Common myeloid progenitor, CD34-positive (primary cell): ENCODE measurements at regions of chr2 and their contacts with region 1.

Region 1: DNA sequence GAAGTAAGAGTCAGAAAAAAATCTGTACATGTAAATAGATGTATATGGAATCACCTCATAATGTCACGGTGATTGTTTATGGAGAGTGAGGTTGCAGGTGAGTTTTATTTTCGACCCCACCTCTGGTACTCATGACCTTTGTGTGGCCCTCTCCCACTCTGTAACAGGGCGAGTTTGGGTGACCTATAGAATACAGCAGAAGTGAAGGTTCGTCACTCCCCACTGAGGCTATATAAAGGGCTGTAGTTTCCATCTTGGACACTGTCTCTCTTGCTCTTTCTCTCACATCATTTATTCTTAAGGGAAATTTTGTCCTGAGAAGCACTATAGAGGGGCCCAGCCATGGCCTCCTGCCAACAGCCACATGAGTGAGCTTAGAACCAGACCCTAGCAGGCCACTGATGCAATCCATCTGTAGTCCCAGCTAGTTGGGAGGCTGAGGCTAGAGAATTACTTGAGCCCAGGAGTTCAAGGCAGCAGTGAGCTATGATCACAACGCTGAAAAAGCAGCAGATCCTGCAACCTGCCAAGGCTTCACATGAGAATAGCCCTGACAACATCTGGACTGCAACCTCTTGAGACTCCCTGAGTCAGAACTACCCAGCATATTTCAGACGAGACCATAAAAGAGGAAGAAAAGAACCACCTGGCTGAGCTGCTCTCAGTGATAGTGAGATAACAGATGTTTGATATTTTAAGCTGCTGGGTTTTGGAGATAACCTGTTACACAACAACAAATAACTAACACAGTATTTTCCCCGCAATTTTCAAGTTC is 74.3 kb upstream of the SLC1A4 start:
- DNase-seq: peak; percentile 78 to 98 (median 97)
- H3K4me3 ChIP-seq: no peak overlapping the region
- H3K27ac ChIP-seq: no peak overlapping the region
- H3K4me1 ChIP-seq: peaks cover 13 to 39% (median 31%) of the 10 kb centered on the region in 4 experiments
- H3K27me3 ChIP-seq: no peaks in the 10 kb centered on the region

Region 2: DNA sequence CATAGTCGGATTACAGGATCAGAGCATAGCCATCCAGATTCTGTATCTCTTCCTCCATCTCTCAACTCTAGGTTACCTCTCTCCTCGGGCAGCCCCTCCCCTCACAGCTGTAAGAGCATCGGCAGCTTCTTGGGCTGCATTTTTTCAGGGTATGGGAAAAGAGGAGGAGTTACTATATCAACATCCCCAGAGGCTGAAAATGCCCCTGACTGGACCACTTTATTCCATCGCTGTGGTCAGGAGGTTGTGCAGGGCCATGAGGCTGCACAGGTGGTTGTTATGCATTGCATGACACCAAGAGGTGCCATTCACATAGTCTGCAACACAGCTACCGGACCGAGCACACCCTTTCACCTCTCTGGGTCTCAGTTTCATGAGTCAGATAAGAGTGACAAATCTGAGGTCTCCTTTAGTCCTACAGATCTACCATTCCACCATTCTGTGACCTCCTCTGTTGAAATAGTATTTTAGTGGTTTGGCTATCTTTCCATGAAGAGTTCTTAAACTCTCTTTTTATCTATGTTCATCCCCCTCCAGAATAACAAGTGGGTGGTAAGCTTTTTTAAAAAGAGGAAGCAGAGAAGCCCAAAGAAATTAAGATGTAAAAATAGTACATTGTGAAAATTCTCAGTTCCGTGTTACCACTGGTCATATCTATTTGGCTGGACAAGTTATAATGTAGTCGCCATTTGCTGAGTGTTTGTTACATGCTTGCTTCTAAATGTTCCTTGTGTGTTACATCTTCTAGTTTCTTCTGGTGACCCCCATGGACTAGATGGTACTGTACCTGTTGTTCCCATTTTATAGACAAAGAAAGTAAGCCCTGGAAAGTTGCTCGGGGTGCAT is 17.7 kb after region 1 on chr2:
- CTCF ChIA-PET with region 1: interaction called, 18 read pairs
- POLR2A ChIA-PET with region 1: no interaction called
- DNase-seq: peak in 2 of 3 donors; percentile 69 to 76
- H3K4me3 ChIP-seq: peak overlapping the region in 1 of 7 experiments; percentile 3
- H3K27ac ChIP-seq: no peak overlapping the region
- H3K4me1 ChIP-seq: peaks cover 6 to 34% (median 22%) of the 10 kb centered on the region in 4 experiments
- H3K27me3 ChIP-seq: no peaks in the 10 kb centered on the region

Region 3: GRCh38 chr2:64945973-64946768 is 31.2 kb after region 1 on chr2:
- CTCF ChIA-PET with region 1: interaction called, 36 read pairs
- POLR2A ChIA-PET with region 1: interaction called, 4 read pairs
- DNase-seq: peak; percentile 52 to 82 (median 78)
- H3K4me3 ChIP-seq: peak overlapping the region in 5 of 7 experiments; percentile 0 to 55 (median 50)
- H3K27ac ChIP-seq: peak overlapping the region; percentile 89 to 91
- H3K4me1 ChIP-seq: peaks cover 15 to 82% (median 76%) of the 10 kb centered on the region in 4 experiments
- H3K27me3 ChIP-seq: no peaks in the 10 kb centered on the region

Region 4: DNA sequence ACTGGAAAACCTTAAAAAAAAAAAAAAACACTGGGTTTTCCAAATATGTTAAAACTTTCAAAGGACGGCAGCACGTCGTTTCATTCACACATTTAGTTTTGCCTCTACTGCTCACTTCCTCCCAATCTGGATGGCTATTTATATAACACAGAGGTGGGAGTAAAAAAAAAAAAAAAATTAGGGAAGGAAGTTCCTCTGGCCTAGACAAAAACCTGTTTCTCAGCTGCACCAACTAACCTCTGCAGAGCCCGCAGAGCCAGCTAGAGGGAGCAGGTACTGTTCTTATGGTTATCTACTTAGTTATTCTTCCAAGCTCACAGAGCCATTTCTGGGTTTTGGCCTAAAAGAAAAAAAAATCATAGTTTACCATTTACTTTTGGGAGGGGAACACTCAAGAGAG is 102.4 kb after region 1 on chr2:
- CTCF ChIA-PET with region 1: interaction called, 17 read pairs
- POLR2A ChIA-PET with region 1: no interaction called
- DNase-seq: peak; percentile 90 to 92 (median 91)
- H3K4me3 ChIP-seq: peak overlapping the region in 3 of 7 experiments; percentile 7 to 62 (median 53)
- H3K27ac ChIP-seq: no peak overlapping the region
- H3K4me1 ChIP-seq: peaks cover 18 to 40% (median 37%) of the 10 kb centered on the region in 4 experiments
- H3K27me3 ChIP-seq: no peaks in the 10 kb centered on the region

Region 5: DNA sequence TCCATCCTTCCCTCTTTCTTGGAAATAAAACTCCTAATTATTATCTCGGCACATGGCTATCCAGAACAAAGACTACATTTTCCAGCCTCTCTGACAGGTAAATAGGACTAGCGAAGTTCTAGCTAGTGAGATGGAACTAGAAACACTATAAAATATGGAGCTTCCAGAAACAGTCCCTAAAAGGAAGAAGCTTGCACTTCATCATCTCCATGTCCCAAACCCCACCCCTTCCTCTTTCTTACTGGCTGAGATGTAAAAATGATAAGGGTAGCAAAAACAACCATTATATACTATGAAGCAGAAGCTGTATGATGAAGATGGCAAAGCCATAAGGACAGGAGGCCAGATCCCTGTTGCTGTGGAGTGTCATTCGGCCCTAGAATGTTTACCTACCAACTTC is 301.0 kb after region 1 on chr2:
- CTCF ChIA-PET with region 1: no interaction called
- POLR2A ChIA-PET with region 1: no interaction called
- DNase-seq: peak in 2 of 3 donors; percentile 36 to 51
- H3K4me3 ChIP-seq: no peak overlapping the region
- H3K27ac ChIP-seq: no peak overlapping the region
- H3K4me1 ChIP-seq: peaks cover 0 to 9% (median 5%) of the 10 kb centered on the region in 4 experiments
- H3K27me3 ChIP-seq: no peaks in the 10 kb centered on the region